Activated naive CD4-positive, alpha-beta T cell treated with anti-CD3 and anti-CD28 coated beads for 36 hours (primary cell): ENCODE measurements at regions of chrX and their contacts with region 1.

Region 1: DNA sequence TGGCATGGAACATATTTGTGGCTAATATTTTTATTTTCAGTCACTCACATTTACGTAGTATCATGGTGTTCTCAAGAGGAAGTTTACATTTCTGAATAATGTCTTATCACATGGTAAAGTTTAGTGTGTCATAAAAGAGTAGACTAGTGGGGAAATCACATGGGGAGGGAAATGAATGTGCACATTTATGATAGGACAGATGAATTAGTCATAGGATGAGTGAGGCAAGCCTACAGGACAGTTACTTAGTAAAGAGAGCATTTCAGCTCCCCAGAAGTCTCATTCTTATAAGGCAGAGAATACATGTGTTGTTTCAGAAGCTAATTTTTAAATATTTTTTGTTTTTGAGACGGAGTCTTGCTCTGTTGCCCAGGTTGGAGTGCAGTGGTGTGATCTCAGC is 6.2 kb downstream of the GK start:
- DNase-seq: no peak
- H3K4me3 Mint-ChIP-seq: peak overlapping the region; percentile 29
- H3K27ac Mint-ChIP-seq: peak overlapping the region; percentile 85
- H3K4me1 Mint-ChIP-seq: peaks cover 34% of the 10 kb centered on the region
- H3K27me3 Mint-ChIP-seq: no peaks in the 10 kb centered on the region

Region 2: GRCh38 chrX:30643313-30643821 is 16.1 kb before region 1 on chrX:
- CTCF ChIA-PET with region 1: interaction called, 13 read pairs
- intact Hi-C with region 1: loop called (anchors 1 kb)
- DNase-seq: no peak
- H3K4me3 Mint-ChIP-seq: no peak overlapping the region
- H3K27ac Mint-ChIP-seq: peak overlapping the region; percentile 82
- H3K4me1 Mint-ChIP-seq: peaks cover 24% of the 10 kb centered on the region
- H3K27me3 Mint-ChIP-seq: no peaks in the 10 kb centered on the region

Region 3: DNA sequence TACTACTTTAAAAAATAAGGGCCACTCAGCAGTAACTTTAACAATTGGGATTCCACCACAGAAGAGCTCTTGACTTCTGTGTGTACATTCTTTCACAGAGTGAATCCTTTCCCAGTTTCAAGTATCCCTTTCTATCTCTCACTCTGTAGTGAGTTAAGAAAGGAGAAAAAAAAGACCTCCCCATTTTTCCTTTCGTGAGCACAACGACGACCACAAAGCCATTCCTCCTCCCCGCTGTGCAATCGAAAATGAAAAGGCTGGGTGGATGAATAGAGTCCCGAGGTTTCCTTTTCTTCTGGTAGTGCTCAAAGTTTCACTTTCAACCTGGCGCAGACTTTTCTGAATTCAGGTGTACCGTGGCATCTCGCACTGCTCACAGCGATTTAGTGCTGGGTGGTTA is 171.7 kb after region 1 on chrX:
- CTCF ChIA-PET with region 1: no interaction called
- intact Hi-C with region 1: loop called (anchors 2 kb)
- DNase-seq: peak; percentile 48
- H3K4me3 Mint-ChIP-seq: no peak overlapping the region
- H3K27ac Mint-ChIP-seq: peak overlapping the region; percentile 12
- H3K4me1 Mint-ChIP-seq: peaks cover 34% of the 10 kb centered on the region
- H3K27me3 Mint-ChIP-seq: no peaks in the 10 kb centered on the region